Mucosa of descending colon (tissue), 3 donors: ENCODE measurements at regions of chr1 and their contacts with region 1.

Region 1: GRCh38 chr1:226649780-226650179 is 89.3 kb downstream of the ITPKB start:
- DNase-seq: peak in 1 of 3 donors; percentile 29
- ATAC-seq: no peak
- H3K4me3 ChIP-seq: no peak overlapping the region
- H3K4me1 ChIP-seq: peaks cover 4% of the 10 kb centered on the region
- CTCF ChIP-seq: no peak

Region 2: DNA sequence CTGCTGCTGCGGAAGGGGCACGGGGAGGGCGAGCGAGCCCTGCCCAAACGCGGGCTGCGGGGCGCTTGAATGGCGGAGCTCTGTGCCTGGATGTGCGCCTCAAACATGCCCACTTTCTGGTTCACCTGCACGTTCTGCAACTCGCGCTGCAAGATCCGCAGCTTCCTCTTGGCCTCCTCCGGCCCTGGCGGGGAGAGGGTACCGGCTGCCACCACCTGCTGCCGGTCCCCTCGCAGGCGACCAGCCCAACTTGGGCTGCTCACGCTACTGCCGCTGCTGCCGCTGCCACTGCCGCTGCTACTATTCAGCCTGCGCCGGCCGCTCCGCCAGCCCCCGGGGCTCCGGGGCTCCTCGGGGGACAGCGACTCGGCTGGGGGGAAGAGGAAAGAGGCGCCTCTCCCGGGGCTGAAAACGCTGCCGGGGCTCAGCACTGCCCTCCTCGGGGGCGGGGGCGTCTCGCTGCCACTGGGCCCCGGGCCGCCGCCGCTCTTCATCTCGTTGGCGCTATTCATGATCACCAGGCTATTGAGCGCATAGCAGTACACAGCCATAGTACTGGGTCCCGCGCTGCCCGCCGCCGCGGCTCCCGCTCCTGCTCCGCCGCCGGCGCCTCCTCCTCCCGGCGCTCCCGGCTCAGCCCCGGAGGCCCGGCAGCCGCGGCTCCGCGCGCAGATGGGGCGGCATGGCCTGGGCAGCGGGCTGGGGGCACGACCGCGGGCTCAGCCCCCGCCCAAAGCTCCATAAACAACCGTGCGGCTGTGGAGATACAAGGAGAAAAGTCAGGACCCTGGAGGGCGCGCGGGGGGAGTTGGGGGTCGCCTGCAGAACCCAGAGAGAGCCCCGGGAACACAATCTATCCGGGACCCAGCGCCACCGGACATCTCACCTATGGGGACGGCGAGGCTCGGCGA is 87.4 kb after region 1 on chr1:
- intact Hi-C with region 1: loop called in 1 of 2 experiments (anchors 10 kb)
- DNase-seq: peak; percentile 51 to 69 (median 57)
- ATAC-seq: peak; percentile 46
- H3K4me3 ChIP-seq: peak overlapping the region; percentile 57
- H3K4me1 ChIP-seq: peaks cover 14% of the 10 kb centered on the region
- CTCF ChIP-seq: no peak